Heart left ventricle (tissue), 16 donors: ENCODE measurements at regions of chr10 and their contacts with region 1.

Region 1: GRCh38 chr10:110746254-110746826 is 102.2 kb downstream of the RBM20 start:
- DNase-seq: peak in 3 of 5 donors; percentile 55 to 59 (median 55)
- ATAC-seq: peak; percentile 32 to 60 (median 58)
- H3K4me3 ChIP-seq: no peak overlapping the region
- H3K27ac ChIP-seq: peak overlapping the region in 9 of 12 donors; percentile 15 to 86 (median 53)
- H3K4me1 ChIP-seq: peaks cover 2 to 72% (median 31%) of the 10 kb centered on the region in 12 donors
- H3K27me3 ChIP-seq: no peaks in the 10 kb centered on the region
- CTCF ChIP-seq: peak; percentile 66 to 88 (median 82)
- POLR2A ChIP-seq: no peak

Region 2: DNA sequence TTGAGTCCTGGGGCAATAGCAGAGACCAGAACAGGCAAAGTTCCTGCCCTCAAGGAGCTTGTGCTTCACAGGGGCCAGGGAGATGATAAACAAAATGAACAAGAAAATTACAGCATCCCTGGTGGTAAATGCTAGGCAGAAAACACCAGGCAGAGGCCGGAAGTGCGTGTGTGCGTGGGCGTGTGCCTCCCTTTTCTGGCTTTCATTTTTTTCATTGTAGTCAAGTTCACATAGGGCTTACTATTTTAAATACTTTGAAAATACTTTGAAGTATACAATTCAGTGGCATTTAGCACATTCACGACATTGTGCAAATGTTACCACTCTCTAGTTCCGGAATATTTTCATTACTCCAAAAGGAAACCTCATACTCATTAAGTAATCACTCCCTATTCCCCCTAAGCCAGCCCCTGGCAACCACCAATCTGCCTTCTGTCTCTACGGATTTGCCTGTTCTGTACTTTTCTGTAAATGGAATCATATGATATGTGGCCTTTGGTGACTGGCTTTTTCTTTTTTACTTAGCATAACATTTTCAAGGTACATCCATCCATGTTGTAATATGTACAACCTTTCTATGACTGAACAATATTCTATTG is 37.3 kb after region 1 on chr10:
- intact Hi-C with region 1: loop called in 1 of 10 experiments (anchors 5 kb)
- DNase-seq: no peak
- ATAC-seq: no peak
- H3K4me3 ChIP-seq: no peak overlapping the region
- H3K27ac ChIP-seq: peak overlapping the region in 10 of 12 donors; percentile 3 to 80 (median 58)
- H3K4me1 ChIP-seq: peaks cover 3 to 93% (median 30%) of the 10 kb centered on the region in 12 donors
- H3K27me3 ChIP-seq: no peaks in the 10 kb centered on the region
- CTCF ChIP-seq: no peak
- POLR2A ChIP-seq: no peak

Region 3: DNA sequence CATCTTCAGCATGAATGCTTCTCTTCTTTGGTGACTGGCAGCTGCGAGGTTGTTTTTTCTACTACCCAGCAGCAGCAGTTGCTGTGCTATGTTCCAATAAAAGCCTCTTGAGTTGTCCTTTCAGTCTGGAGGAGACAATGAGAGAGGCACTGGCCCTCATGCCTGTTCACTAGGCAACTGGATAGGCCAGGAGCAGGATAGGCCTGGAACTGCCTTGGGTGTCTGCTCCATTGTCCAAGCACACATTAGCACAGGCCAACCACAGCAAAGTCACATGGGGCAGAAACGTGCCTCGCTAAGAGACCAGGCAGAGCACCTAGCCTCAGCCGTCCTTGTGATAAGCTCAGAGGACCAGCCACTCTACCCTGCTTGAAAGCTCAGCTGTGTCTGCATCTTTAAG is 48.5 kb after region 1 on chr10:
- intact Hi-C with region 1: loop called in 2 of 10 experiments (anchors 5 to 10 kb)
- DNase-seq: peak in 4 of 5 donors; percentile 72 to 89 (median 80)
- ATAC-seq: peak; percentile 92 to 97 (median 95)
- H3K4me3 ChIP-seq: no peak overlapping the region
- H3K27ac ChIP-seq: peak overlapping the region; percentile 1 to 82 (median 64)
- H3K4me1 ChIP-seq: peaks cover 0 to 64% (median 28%) of the 10 kb centered on the region in 12 donors
- H3K27me3 ChIP-seq: no peaks in the 10 kb centered on the region
- CTCF ChIP-seq: no peak
- POLR2A ChIP-seq: no peak

Region 4: GRCh38 chr10:110803830-110804338 is 57.5 kb after region 1 on chr10:
- intact Hi-C with region 1: loop called in 1 of 10 experiments (anchors 10 kb)
- DNase-seq: peak in 2 of 5 donors; percentile 53 to 55
- ATAC-seq: peak; percentile 44 to 66 (median 58)
- H3K4me3 ChIP-seq: no peak overlapping the region
- H3K27ac ChIP-seq: peak overlapping the region in 8 of 12 donors; percentile 14 to 68 (median 31)
- H3K4me1 ChIP-seq: peaks cover 0 to 42% (median 26%) of the 10 kb centered on the region in 12 donors
- H3K27me3 ChIP-seq: no peaks in the 10 kb centered on the region
- CTCF ChIP-seq: peak; percentile 36 to 74 (median 55)
- POLR2A ChIP-seq: no peak

Region 5: GRCh38 chr10:110880012-110880411 is 133.7 kb after region 1 on chr10:
- intact Hi-C with region 1: no loop called
- DNase-seq: no peak
- ATAC-seq: peak; percentile 61 to 85 (median 80)
- H3K4me3 ChIP-seq: no peak overlapping the region
- H3K27ac ChIP-seq: peak overlapping the region in 2 of 12 donors; percentile 13 to 48
- H3K4me1 ChIP-seq: peaks cover 0 to 37% (median 6%) of the 10 kb centered on the region in 12 donors
- H3K27me3 ChIP-seq: no peaks in the 10 kb centered on the region
- CTCF ChIP-seq: no peak
- POLR2A ChIP-seq: no peak

Region 6: DNA sequence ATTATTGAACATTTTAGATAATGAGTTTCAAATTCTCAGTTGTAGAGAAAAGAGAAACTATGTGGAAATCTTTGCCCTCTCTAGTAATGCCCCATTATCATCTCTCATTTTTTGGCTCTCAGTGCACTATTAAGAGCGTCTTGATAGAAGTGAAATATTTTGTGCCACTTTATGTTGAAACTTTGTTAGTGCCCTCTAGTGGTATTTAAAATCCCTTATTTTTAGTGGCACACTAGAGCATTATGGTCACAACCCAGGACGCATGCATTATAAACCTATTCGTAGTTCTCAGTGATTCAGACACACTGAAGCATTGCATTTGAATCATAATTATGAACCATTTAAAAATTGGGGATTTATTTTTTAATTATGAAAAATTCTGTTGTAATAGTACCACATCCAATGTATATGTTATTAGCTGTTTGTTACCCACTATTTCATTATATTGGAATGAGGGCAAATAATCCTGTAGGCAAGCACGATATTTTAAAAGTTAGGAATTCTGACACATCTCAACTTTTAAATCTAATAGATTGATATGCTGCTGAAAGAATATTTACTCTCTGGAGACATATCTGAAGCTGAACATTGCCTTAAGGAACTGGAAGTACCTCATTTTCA is 147.3 kb after region 1 on chr10:
- intact Hi-C with region 1: loop called (anchors 1 to 5 kb)
- DNase-seq: no peak
- ATAC-seq: peak; percentile 47 to 84 (median 77)
- H3K4me3 ChIP-seq: no peak overlapping the region
- H3K27ac ChIP-seq: peak overlapping the region in 1 of 12 donors; percentile 20
- H3K4me1 ChIP-seq: peaks cover 0 to 13% (median 4%) of the 10 kb centered on the region in 12 donors
- H3K27me3 ChIP-seq: no peaks in the 10 kb centered on the region
- CTCF ChIP-seq: peak; percentile 47 to 73 (median 66)
- POLR2A ChIP-seq: no peak

Region 7: GRCh38 chr10:111093741-111094380 is 347.5 kb after region 1 on chr10:
- intact Hi-C with region 1: no loop called
- DNase-seq: no peak
- ATAC-seq: no peak
- H3K4me3 ChIP-seq: no peak overlapping the region
- H3K27ac ChIP-seq: no peak overlapping the region
- H3K4me1 ChIP-seq: no peaks in the 10 kb centered on the region
- H3K27me3 ChIP-seq: peaks cover 0 to 18% (median 0%) of the 10 kb centered on the region in 9 donors
- CTCF ChIP-seq: no peak
- POLR2A ChIP-seq: no peak